Sigmoid colon (tissue), 7 donors: ENCODE measurements at regions of chr16 and their contacts with region 1.

Region 1: DNA sequence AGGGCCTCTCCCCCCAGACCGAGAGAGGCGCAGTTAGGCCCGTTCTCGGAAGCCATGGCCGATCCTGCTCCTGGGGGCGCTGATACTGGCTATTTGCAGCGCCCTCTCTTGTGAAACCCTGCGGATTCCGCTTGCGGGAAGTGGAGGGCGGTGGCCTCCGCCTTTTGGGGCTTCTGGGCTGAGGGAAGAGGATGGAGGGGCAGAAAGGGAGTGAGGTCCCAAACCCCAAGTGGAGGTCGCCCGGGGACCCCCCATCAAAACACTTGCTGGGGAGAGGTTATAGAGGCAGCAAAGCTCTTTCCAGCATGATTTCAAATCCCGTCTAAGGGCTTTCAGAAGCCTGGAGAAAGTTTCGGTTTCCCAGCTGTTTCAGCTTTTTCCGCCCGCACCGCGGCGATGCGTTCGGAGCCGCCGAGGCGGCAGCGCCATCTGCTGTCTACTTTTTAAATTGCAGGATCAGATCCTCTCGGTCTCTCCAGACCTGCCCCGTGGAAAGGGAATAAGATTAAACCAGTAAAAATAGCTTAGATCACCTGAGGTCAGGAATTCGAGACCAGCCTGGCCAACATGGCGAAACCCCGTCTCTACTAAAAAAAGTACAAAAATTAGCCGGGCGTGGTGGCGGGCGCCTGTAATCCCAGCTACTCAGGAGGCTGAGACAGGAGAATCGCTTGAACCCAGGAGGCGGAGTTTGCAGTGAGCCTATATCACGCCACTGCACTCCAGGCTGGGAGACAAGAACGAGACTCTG is 15.8 kb downstream of the SNX20 start:
- DNase-seq: peak; percentile 86
- H3K4me3 ChIP-seq: peak overlapping the region; percentile 38 to 54 (median 52)
- H3K27ac ChIP-seq: peak overlapping the region; percentile 68 to 76 (median 73)
- H3K4me1 ChIP-seq: peaks cover 0 to 13% (median 7%) of the 10 kb centered on the region in 4 donors
- H3K27me3 ChIP-seq: no peaks in the 10 kb centered on the region
- CTCF ChIP-seq: peak; percentile 79 to 82 (median 80)
- EP300 ChIP-seq: no peak
- POLR2A ChIP-seq: no peak

Region 2: GRCh38 chr16:50024684-50025536 is 640.4 kb before region 1 on chr16 and contains the start of gene CNEP1R1:
- intact Hi-C with region 1: loop called (anchors 2 kb)
- DNase-seq: peak; percentile 98
- H3K4me3 ChIP-seq: peak within 1 kb of the TSS; percentile 89 to 100 (median 100)
- H3K27ac ChIP-seq: peak within 1 kb of the TSS; percentile 84 to 91 (median 88)
- H3K4me1 ChIP-seq: peaks cover 0 to 35% (median 21%) of the 10 kb centered on the region in 4 donors
- H3K27me3 ChIP-seq: no peaks in the 10 kb centered on the region
- CTCF ChIP-seq: peak; percentile 99 to 100 (median 100)
- EP300 ChIP-seq: peak in 1 of 4 donors; percentile 44
- POLR2A ChIP-seq: peak; percentile 38 to 53
- total RNA-seq, gene CNEP1R1: 10.2 to 18.9 (median 14.1) TPM

Region 3: DNA sequence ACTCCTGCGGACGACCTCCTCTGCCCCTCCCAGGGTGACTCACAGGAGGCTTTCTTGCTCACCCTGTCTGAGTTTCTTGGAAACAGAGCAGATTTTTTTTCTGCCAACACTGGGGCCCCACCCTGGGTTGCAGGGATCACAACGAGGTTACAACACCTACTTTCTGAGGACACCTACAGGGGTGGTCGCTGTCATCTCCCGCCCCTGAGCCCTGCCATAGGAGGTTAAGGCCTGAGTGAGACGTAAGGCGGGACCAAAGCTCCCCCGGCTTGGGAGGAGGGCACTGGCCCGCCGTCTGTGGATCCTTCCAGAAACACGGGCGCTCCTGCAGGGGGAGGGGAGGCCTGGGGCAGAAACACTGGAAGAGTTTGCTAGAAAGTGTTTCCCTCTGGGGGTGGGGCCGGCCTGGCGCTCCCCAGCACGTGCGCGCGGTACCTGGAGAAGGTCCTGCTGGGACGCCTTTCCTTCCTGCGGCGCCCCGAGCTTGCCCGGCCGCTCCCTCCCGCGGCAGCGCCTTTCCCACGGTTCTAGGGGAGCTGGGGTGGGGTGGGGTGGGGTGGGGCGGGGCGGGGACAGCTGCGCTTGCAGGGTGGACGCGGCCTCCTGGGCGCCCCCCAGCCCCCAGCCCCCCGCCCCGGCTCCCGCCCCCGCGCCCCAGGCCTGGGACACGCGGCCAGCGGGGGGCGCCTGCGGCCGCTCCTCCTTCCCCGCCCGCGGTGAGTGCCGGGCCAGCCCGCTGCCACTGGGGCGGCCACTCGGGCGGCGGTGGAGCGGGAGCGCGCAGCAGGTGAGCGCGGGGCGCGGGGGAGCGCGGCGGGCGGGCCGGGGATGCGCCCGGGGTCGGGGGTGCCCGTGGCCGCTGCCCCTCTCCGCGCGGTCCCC is 419.6 kb before region 1 on chr16:
- intact Hi-C with region 1: loop called (anchors 10 kb)
- DNase-seq: no peak
- H3K4me3 ChIP-seq: peak overlapping the region; percentile 50 to 70 (median 63)
- H3K27ac ChIP-seq: peak overlapping the region in 3 of 4 donors; percentile 31 to 41 (median 37)
- H3K4me1 ChIP-seq: peaks cover 0 to 19% (median 17%) of the 10 kb centered on the region in 4 donors
- H3K27me3 ChIP-seq: no peaks in the 10 kb centered on the region
- CTCF ChIP-seq: peak in 1 of 4 experiments; percentile 36
- EP300 ChIP-seq: no peak
- POLR2A ChIP-seq: no peak

Region 4: GRCh38 chr16:50593410-50594150 is 71.7 kb before region 1 on chr16:
- intact Hi-C with region 1: loop called (anchors 2 kb)
- DNase-seq: no peak
- H3K4me3 ChIP-seq: no peak overlapping the region
- H3K27ac ChIP-seq: peak overlapping the region; percentile 76 to 86 (median 82)
- H3K4me1 ChIP-seq: peaks cover 0 to 54% (median 46%) of the 10 kb centered on the region in 4 donors
- H3K27me3 ChIP-seq: no peaks in the 10 kb centered on the region
- CTCF ChIP-seq: peak in 1 of 4 experiments; percentile 21
- EP300 ChIP-seq: no peak
- POLR2A ChIP-seq: no peak